Thyroid gland (tissue), 4 donors: ENCODE measurements at regions of chr11 and their contacts with region 1.

Region 1: GRCh38 chr11:35391922-35392813 is 27.2 kb downstream of the SLC1A2 start:
- DNase-seq: peak; percentile 76 to 84
- H3K4me3 ChIP-seq: peak overlapping the region in 1 of 3 donors; percentile 0
- H3K27ac ChIP-seq: peak overlapping the region in 2 of 3 donors; percentile 55 to 87
- H3K4me1 ChIP-seq: peaks cover 25 to 28% of the 10 kb centered on the region in 2 donors
- H3K27me3 ChIP-seq: no peaks in the 10 kb centered on the region
- CTCF ChIP-seq: peak; percentile 54 to 96 (median 84)
- POLR2A ChIP-seq: no peak

Region 2: GRCh38 chr11:34926101-34926830 is 465.9 kb before region 1 on chr11:
- intact Hi-C with region 1: loop called (anchors 10 kb)
- DNase-seq: no peak
- H3K4me3 ChIP-seq: no peak overlapping the region
- H3K27ac ChIP-seq: no peak overlapping the region
- H3K4me1 ChIP-seq: peaks cover 37 to 47% of the 10 kb centered on the region in 2 donors
- H3K27me3 ChIP-seq: no peaks in the 10 kb centered on the region
- CTCF ChIP-seq: peak in 5 of 6 experiments; percentile 33 to 92 (median 73)
- POLR2A ChIP-seq: no peak

Region 3: GRCh38 chr11:35541621-35542375 is 149.6 kb after region 1 on chr11:
- intact Hi-C with region 1: no loop called
- DNase-seq: no peak
- H3K4me3 ChIP-seq: no peak overlapping the region
- H3K27ac ChIP-seq: no peak overlapping the region
- H3K4me1 ChIP-seq: no peaks in the 10 kb centered on the region
- H3K27me3 ChIP-seq: no peaks in the 10 kb centered on the region
- CTCF ChIP-seq: no peak
- POLR2A ChIP-seq: no peak